Activated CD4-positive, alpha-beta memory T cell treated with anti-CD3 and anti-CD28 coated beads, Interleukin-2, amount 10 ng/mL, durations not matched to agents 7 days and 5 days (primary cell): ENCODE measurements at regions of chr12 and their contacts with region 1.

Region 1: DNA sequence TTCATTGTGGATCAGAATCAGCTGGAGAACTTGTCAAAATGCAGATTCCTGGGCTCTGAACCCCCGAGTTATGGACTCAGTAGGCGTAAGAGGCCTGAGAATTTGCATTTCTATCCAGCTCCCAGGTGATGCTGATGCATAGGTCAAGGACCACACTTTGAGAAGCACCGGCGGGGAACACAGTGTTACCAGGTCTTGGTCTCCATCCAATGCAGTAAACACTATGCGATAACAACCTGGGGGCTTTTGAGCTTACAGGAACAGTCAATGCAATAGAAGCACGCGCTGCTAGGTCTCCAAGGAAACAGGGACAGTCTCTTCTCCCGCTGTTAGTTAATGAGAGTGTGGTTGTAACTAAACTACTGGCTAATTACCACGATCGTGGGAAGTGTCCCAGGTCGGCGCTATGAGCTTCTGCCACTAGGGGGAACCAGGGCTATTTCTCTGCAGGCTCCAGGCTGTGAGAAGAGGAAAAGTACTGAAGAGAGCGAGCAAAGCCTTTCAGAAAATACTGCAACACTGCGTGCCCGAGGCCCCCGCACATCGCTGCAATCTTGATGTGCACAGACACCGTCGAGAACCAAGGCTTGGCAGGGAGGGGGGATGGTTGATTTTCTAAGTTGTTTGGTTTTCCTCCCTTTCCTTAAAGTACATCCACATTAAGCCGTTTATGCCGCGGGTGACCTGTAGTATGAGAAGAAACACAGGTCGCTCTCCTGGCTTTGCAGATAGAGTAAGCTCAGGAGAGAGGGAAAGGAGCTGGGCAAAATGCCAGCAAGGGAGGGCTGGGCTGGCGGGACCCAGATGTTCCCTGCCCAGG is 52.0 kb upstream of the KCNA1 start:
- DNase-seq: peak; percentile 79
- H3K4me3 Mint-ChIP-seq: no peak overlapping the region
- H3K27ac Mint-ChIP-seq: no peak overlapping the region
- H3K4me1 Mint-ChIP-seq: peaks cover 20% of the 10 kb centered on the region
- H3K27me3 Mint-ChIP-seq: peaks cover 29% of the 10 kb centered on the region

Region 2: GRCh38 chr12:4809013-4809448 is 48.7 kb before region 1 on chr12:
- CTCF ChIA-PET with region 1: interaction called, 32 read pairs
- POLR2A ChIA-PET with region 1: interaction called, 3 read pairs
- DNase-seq: no peak
- H3K4me3 Mint-ChIP-seq: peak overlapping the region; percentile 38
- H3K27ac Mint-ChIP-seq: no peak overlapping the region
- H3K4me1 Mint-ChIP-seq: peaks cover 47% of the 10 kb centered on the region
- H3K27me3 Mint-ChIP-seq: peaks cover 14% of the 10 kb centered on the region

Region 3: GRCh38 chr12:5083955-5084849 is 226.5 kb after region 1 on chr12:
- CTCF ChIA-PET with region 1: interaction called, 11 read pairs
- POLR2A ChIA-PET with region 1: no interaction called
- DNase-seq: no peak
- H3K4me3 Mint-ChIP-seq: no peak overlapping the region
- H3K27ac Mint-ChIP-seq: no peak overlapping the region
- H3K4me1 Mint-ChIP-seq: no peaks in the 10 kb centered on the region
- H3K27me3 Mint-ChIP-seq: peaks cover 10% of the 10 kb centered on the region

Region 4: DNA sequence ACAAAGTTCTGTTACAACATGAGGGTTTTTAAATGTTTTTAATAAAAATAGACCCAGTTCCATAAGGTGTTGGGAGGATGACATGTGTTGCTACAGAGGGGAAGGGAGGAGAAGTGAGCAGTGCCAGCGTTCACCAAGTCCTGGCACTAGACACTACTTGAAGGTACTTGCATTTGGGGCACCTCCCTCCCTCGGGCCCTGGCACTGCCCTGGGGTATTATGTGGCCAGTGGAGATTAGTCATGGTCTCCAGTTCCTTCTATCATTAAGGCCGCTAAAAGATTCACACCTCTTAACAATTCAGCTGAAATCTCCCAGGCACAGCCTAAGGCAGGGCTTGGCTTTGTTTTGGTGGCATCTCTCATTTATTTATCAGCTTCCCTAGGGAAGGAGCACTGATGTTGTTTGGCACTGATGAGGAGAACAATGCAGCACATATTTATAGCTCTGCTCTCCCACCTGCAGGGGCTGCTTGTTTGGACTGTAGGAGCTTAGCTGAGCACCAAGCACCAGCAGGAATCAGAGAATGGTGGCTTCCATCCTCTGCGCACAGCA is 418.7 kb after region 1 on chr12:
- CTCF ChIA-PET with region 1: no interaction called
- POLR2A ChIA-PET with region 1: no interaction called
- DNase-seq: no peak
- H3K4me3 Mint-ChIP-seq: no peak overlapping the region
- H3K27ac Mint-ChIP-seq: no peak overlapping the region
- H3K4me1 Mint-ChIP-seq: no peaks in the 10 kb centered on the region
- H3K27me3 Mint-ChIP-seq: no peaks in the 10 kb centered on the region